ENCODE measurements at regions of chr4 and their contacts with region 1.

Region 1: DNA sequence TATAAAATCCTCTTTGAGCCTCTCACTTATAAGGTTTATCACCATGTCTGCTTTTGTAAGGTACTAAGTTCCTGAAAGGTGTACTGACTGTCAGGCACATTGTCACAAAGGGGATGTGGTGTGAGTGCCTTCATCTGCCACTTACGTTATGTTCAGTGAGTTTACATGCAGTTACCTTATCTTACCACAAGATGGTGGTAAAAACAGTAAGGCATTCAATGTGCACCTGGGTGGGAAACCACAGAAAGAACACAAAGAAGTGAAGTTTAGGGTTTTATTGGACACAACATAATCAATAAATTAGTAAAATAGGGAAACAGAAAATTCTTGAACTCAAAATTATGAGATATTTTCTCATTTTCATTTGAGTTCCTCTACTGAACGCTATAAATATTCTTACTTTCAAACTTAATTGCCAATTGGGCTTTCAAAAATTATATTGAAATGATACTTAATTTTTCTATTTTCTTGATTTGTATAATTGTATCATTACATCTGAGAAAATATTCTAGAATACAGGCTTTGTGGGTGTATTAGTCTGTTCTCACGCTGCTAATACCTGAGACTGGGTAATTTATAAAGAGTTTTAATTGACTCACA is 650.8 kb downstream of the PCDH7 start:
- DNase-seq: peak in 1 of 2 experiments; percentile 1
- H3K4me3 ChIP-seq: no peak overlapping the region
- H3K27ac ChIP-seq: no peak overlapping the region
- H3K4me1 ChIP-seq: no peaks in the 10 kb centered on the region
- H3K27me3 ChIP-seq: no peaks in the 10 kb centered on the region
- CTCF ChIP-seq: peak; percentile 81

Region 2: DNA sequence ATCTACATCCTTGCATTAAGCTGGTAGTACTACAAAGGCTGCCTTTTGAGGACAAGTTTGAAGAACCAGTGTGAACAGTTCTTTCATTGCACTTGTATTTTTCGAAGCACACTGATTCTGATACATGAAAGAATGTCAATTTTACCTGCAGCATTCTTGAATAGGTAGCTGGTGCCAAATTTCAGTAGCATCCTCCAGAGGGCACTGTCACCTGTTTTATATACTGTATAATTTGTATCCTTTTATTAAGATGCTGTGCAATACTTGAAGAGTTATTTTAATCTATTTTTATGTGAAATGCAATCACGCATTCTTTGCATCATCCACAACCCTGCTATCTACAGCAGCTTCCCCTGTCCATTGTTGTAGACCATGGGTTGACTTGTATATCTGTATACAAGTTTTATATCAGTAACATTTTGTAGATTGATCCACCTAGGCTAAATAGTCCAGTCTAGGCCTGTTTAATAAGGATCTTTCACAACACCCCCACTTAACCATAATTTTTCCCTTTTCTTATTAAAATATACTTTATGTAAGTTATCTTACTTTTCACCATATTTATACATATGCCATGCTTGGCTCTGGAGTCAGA is 325.1 kb before region 1 on chr4:
- CTCF ChIA-PET with region 1: no interaction called
- POLR2A ChIA-PET with region 1: interaction called, 3 read pairs
- intact Hi-C with region 1: loop called (anchors 10 kb)
- DNase-seq: peak; percentile 31 to 57
- H3K4me3 ChIP-seq: no peak overlapping the region
- H3K27ac ChIP-seq: no peak overlapping the region
- H3K4me1 ChIP-seq: peaks cover 16% of the 10 kb centered on the region
- H3K27me3 ChIP-seq: no peaks in the 10 kb centered on the region
- CTCF ChIP-seq: peak; percentile 74

Region 3: GRCh38 chr4:31674313-31674947 is 303.5 kb after region 1 on chr4:
- CTCF ChIA-PET with region 1: no interaction called
- POLR2A ChIA-PET with region 1: no interaction called
- intact Hi-C with region 1: loop called (anchors 5 kb)
- DNase-seq: no peak
- H3K4me3 ChIP-seq: no peak overlapping the region
- H3K27ac ChIP-seq: no peak overlapping the region
- H3K4me1 ChIP-seq: no peaks in the 10 kb centered on the region
- H3K27me3 ChIP-seq: no peaks in the 10 kb centered on the region
- CTCF ChIP-seq: peak; percentile 66